Activated CD8-positive, alpha-beta T cell treated with anti-CD3 and anti-CD28 coated beads, Interleukin-2, amount 10 ng/mL, durations not matched to agents 7 days and 5 days (primary cell): ENCODE measurements at regions of chr18 and their contacts with region 1.

Region 1: DNA sequence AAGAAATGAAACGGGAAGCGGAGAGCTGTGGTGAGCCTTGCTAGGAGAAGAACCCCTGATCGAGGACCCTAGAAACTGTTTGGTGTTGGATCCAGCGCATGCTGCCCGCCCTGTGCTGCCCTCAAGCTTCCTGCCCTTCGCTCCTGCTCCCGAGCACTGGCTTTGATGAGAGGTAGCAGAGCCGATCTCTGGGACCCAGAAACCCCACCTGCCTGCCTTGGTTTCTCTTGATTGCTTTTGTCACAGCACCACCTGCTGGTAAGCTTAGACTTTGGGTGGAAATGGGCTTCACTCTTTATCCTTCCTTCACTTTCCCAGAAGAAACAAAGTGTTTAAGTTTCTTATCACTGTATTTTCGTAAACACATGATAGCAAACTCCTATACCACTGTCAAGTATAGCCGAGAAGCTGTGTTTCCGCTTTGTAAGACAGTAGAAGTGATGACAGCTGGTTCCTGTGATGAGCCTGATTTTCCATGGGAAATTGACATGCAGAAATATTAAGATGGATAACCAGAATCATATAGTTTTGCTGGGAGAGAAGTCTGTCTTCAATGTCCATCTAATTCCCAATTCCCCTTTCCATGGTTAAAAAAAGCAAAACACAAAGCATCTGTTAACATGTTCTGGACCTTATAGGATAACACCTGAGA is 267.4 kb downstream of the PHLPP1 start:
- DNase-seq: peak; percentile 71
- ATAC-seq: peak; percentile 75
- H3K4me3 Mint-ChIP-seq: no peak overlapping the region
- H3K27ac Mint-ChIP-seq: no peak overlapping the region
- H3K4me1 Mint-ChIP-seq: peaks cover 7% of the 10 kb centered on the region
- H3K27me3 Mint-ChIP-seq: no peaks in the 10 kb centered on the region

Region 2: GRCh38 chr18:62584241-62585120 is 398.2 kb before region 1 on chr18:
- CTCF ChIA-PET with region 1: interaction called, 14 read pairs
- POLR2A ChIA-PET with region 1: no interaction called
- DNase-seq: peak; percentile 90
- ATAC-seq: peak; percentile 91
- H3K4me3 Mint-ChIP-seq: peak overlapping the region; percentile 31
- H3K27ac Mint-ChIP-seq: peak overlapping the region; percentile 78
- H3K4me1 Mint-ChIP-seq: peaks cover 39% of the 10 kb centered on the region
- H3K27me3 Mint-ChIP-seq: no peaks in the 10 kb centered on the region

Region 3: GRCh38 chr18:62637807-62638687 is 344.7 kb before region 1 on chr18:
- CTCF ChIA-PET with region 1: interaction called, 20 read pairs
- POLR2A ChIA-PET with region 1: no interaction called
- DNase-seq: peak; percentile 63
- ATAC-seq: peak; percentile 79
- H3K4me3 Mint-ChIP-seq: no peak overlapping the region
- H3K27ac Mint-ChIP-seq: no peak overlapping the region
- H3K4me1 Mint-ChIP-seq: peaks cover 9% of the 10 kb centered on the region
- H3K27me3 Mint-ChIP-seq: peaks cover 19% of the 10 kb centered on the region

Region 4: DNA sequence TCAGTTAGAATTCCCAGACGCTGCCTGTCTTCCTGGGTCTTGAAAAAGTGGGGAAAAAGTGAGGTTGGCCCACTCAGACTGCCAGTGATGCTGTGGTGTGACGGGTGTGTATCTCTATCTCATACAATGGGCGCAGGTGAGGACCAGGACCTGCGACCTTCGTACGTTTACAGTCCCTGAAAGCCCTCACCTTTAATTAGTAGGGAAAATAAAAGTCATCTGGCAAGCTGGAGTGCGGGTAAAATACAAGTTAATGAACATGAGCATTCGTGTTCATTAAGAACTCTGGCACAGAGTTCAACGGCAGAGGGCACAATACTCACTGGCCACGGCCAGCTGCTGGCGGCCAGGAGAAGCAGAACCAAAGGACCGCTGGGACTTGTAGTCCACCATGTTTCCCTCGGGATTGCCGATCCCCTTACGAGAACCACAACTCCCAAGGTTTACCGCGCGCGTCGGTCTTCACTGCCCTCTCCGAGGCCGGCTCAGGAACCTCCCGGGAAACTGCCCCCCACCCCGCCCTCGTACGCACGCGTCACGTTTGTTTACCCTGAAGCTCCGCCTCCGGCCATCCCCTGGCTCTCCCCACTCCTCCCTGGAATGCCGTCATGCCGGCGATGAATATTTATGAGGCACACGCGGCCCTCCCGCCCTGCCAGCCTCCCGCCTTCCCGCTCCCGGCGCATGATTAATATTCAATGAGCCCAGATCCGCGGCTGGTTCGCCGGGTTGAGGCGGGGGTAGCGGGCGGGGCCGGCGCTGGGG is 267.9 kb before region 1 on chr18:
- CTCF ChIA-PET with region 1: interaction called, 56 read pairs
- POLR2A ChIA-PET with region 1: interaction called, 3 read pairs
- DNase-seq: peak; percentile 91
- ATAC-seq: peak; percentile 75
- H3K4me3 Mint-ChIP-seq: peak overlapping the region; percentile 88
- H3K27ac Mint-ChIP-seq: peak overlapping the region; percentile 78
- H3K4me1 Mint-ChIP-seq: peaks cover 21% of the 10 kb centered on the region
- H3K27me3 Mint-ChIP-seq: peaks cover 12% of the 10 kb centered on the region

Region 5: GRCh38 chr18:62957885-62958472 is 24.7 kb before region 1 on chr18:
- CTCF ChIA-PET with region 1: interaction called, 16 read pairs
- POLR2A ChIA-PET with region 1: no interaction called
- DNase-seq: peak; percentile 61
- ATAC-seq: peak; percentile 63
- H3K4me3 Mint-ChIP-seq: no peak overlapping the region
- H3K27ac Mint-ChIP-seq: no peak overlapping the region
- H3K4me1 Mint-ChIP-seq: peaks cover 15% of the 10 kb centered on the region
- H3K27me3 Mint-ChIP-seq: no peaks in the 10 kb centered on the region

Region 6: GRCh38 chr18:62999392-62999791 is 16.7 kb after region 1 on chr18:
- CTCF ChIA-PET with region 1: interaction called, 13 read pairs
- POLR2A ChIA-PET with region 1: no interaction called
- DNase-seq: no peak
- ATAC-seq: no peak
- H3K4me3 Mint-ChIP-seq: no peak overlapping the region
- H3K27ac Mint-ChIP-seq: no peak overlapping the region
- H3K4me1 Mint-ChIP-seq: no peaks in the 10 kb centered on the region
- H3K27me3 Mint-ChIP-seq: peaks cover 11% of the 10 kb centered on the region

Region 7: DNA sequence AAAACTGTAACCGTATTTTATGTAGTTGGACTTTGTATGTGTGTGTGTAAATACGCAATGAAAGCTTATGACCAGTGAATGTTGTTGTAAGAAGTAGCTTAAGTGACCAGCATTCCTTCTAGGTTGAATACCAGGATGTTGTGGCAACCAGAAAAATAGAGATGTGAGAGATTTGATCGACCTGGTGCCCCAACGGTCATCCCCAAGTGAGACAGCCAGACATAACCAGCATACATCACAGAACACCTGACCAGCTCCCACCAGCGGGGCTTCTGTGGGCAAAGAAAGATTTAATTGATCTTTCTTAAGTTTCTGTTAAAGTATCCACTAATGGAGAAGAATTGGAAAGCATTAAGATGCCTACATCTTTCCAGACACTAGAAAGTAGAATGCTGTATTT is 1163.6 kb after region 1 on chr18:
- CTCF ChIA-PET with region 1: no interaction called
- POLR2A ChIA-PET with region 1: no interaction called
- DNase-seq: no peak
- ATAC-seq: no peak
- H3K4me3 Mint-ChIP-seq: no peak overlapping the region
- H3K27ac Mint-ChIP-seq: no peak overlapping the region
- H3K4me1 Mint-ChIP-seq: no peaks in the 10 kb centered on the region
- H3K27me3 Mint-ChIP-seq: no peaks in the 10 kb centered on the region